ENCODE measurements at regions of chr20 and their contacts with region 1.

Region 1: GRCh38 chr20:41057999-41058896 is 29.6 kb downstream of the TOP1 start:
- DNase-seq: no peak
- ATAC-seq: no peak
- H3K4me3 Mint-ChIP-seq: no peak overlapping the region
- H3K27ac Mint-ChIP-seq: peak overlapping the region in 4 of 10 donors; percentile 4 to 57 (median 20)
- H3K4me1 Mint-ChIP-seq: peaks cover 41 to 73% (median 63%) of the 10 kb centered on the region in 4 donors
- H3K27me3 Mint-ChIP-seq: no peaks in the 10 kb centered on the region

Region 2: DNA sequence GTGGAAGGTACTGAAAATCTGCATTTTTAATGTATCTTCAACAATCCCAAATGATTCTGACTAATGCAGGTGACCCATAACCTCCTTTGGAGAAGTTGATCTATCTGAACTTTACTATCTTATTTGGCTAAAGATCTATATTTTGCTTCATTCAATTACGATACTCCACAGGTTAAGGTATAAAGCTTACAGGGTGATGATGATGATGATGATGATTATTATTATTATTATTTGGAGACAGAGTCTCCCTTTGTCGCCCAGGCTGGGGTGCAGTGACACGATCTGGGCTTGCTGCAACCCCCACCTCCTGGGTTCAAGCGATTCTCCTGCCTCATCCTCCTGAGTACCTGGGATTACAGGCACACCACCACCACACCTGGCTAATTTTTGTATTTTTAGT is 16.6 kb before region 1 on chr20:
- POLR2A ChIA-PET with region 1: interaction called, 10 read pairs
- DNase-seq: no peak
- ATAC-seq: no peak
- H3K4me3 Mint-ChIP-seq: peak overlapping the region in 1 of 10 donors; percentile 18
- H3K27ac Mint-ChIP-seq: peak overlapping the region in 3 of 10 donors; percentile 20 to 60 (median 52)
- H3K4me1 Mint-ChIP-seq: peaks cover 36 to 89% (median 85%) of the 10 kb centered on the region in 4 donors
- H3K27me3 Mint-ChIP-seq: no peaks in the 10 kb centered on the region